Natural killer cell (primary cell): ENCODE measurements at regions of chr1 and their contacts with region 1.

Region 1: DNA sequence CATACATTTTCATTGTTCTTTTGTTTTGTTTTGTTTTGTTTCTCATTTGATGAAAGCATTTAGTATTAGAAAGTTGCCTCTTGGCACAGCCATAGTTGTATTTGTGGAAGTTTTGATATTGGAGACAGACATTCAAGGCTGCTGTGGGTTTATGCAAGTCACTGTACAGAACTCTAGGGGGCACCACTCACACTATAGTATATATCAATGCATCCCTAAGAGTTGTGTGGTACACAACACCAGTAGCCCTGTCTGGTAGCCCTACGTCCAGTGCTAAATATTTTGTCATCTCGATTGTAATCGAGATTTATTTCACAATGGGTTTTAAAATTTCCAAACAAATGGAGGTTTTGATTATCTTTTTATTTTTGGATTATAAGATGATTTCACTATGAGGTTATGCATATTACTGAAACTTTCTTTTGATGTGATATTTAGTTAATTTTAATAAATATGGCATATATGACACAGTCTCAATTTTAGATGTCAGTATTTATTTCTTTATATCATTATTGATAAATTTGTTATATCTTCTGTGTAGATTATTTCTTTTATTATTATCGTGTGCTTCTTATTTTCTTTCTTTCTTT is 112.2 kb downstream of the NR5A2 start:
- DNase-seq: peak in 1 of 2 donors; percentile 72
- ATAC-seq: peak; percentile 85 to 98 (median 86)
- H3K4me3 ChIP-seq: no peak overlapping the region
- H3K4me3 Mint-ChIP-seq: no peak overlapping the region
- H3K27ac ChIP-seq: no peak overlapping the region
- H3K27ac Mint-ChIP-seq: no peak overlapping the region
- H3K4me1 ChIP-seq: no peaks in the 10 kb centered on the region
- H3K4me1 Mint-ChIP-seq: no peaks in the 10 kb centered on the region
- H3K27me3 ChIP-seq: no peaks in the 10 kb centered on the region
- H3K27me3 Mint-ChIP-seq: no peaks in the 10 kb centered on the region
- CTCF ChIP-seq: peak; percentile 82

Region 2: GRCh38 chr1:200306944-200307754 is 167.4 kb after region 1 on chr1:
- intact Hi-C with region 1: loop called (anchors 1 kb)
- DNase-seq: peak in 1 of 2 donors; percentile 80
- ATAC-seq: peak; percentile 63 to 72 (median 70)
- H3K4me3 ChIP-seq: no peak overlapping the region
- H3K4me3 Mint-ChIP-seq: peak overlapping the region; percentile 61
- H3K27ac ChIP-seq: no peak overlapping the region
- H3K27ac Mint-ChIP-seq: no peak overlapping the region
- H3K4me1 ChIP-seq: peaks cover 8% of the 10 kb centered on the region
- H3K4me1 Mint-ChIP-seq: peaks cover 9 to 12% of the 10 kb centered on the region in 2 donors
- H3K27me3 ChIP-seq: no peaks in the 10 kb centered on the region
- H3K27me3 Mint-ChIP-seq: peaks cover 0 to 8% of the 10 kb centered on the region in 2 donors
- CTCF ChIP-seq: peak; percentile 92

Region 3: GRCh38 chr1:200488375-200489165 is 348.8 kb after region 1 on chr1:
- intact Hi-C with region 1: loop called (anchors 5 kb)
- DNase-seq: peak in 1 of 2 donors; percentile 70
- ATAC-seq: peak in 2 of 3 donors; percentile 57 to 61
- H3K4me3 ChIP-seq: no peak overlapping the region
- H3K4me3 Mint-ChIP-seq: no peak overlapping the region
- H3K27ac ChIP-seq: no peak overlapping the region
- H3K27ac Mint-ChIP-seq: no peak overlapping the region
- H3K4me1 ChIP-seq: no peaks in the 10 kb centered on the region
- H3K4me1 Mint-ChIP-seq: no peaks in the 10 kb centered on the region
- H3K27me3 ChIP-seq: no peaks in the 10 kb centered on the region
- H3K27me3 Mint-ChIP-seq: peaks cover 11 to 40% of the 10 kb centered on the region in 2 donors
- CTCF ChIP-seq: peak; percentile 62